Mammary epithelial cell (primary cell): ENCODE measurements at regions of chr2 and their contacts with region 1.

Region 1: DNA sequence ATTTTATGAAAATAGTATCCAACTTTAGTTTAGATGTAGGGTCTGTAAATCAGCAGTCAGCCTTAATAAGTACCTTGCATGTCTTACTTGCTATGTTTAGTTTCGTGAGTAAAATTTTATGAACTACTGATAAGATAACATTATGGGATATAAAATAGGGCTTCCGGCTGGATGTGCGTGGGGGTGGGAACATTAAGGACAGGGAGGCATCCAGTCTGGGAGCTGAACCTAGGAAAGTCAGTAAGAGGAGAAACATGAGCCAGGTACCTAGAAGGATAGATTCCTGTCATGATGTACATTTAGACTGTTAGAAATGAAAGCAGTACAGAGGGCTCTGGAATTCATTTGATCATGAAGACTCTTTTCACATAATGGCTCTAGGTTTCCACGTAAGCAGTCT is 12.7 kb upstream of the KCNJ13 start:
- DNase-seq: no peak
- H3K4me3 ChIP-seq: no peak overlapping the region
- H3K27ac ChIP-seq: no peak overlapping the region
- H3K4me1 ChIP-seq: no peaks in the 10 kb centered on the region
- H3K27me3 ChIP-seq: no peaks in the 10 kb centered on the region
- CTCF ChIP-seq: no peak

Region 2: GRCh38 chr2:232744963-232745362 is 44.1 kb before region 1 on chr2:
- CTCF ChIA-PET with region 1: no interaction called
- dilution Hi-C with region 1: no loop called
- in situ Hi-C with region 1: no loop called
- intact Hi-C with region 1: no loop called
- DNase-seq: no peak
- H3K4me3 ChIP-seq: no peak overlapping the region
- H3K27ac ChIP-seq: no peak overlapping the region
- H3K4me1 ChIP-seq: no peaks in the 10 kb centered on the region
- H3K27me3 ChIP-seq: no peaks in the 10 kb centered on the region
- CTCF ChIP-seq: no peak

Region 3: DNA sequence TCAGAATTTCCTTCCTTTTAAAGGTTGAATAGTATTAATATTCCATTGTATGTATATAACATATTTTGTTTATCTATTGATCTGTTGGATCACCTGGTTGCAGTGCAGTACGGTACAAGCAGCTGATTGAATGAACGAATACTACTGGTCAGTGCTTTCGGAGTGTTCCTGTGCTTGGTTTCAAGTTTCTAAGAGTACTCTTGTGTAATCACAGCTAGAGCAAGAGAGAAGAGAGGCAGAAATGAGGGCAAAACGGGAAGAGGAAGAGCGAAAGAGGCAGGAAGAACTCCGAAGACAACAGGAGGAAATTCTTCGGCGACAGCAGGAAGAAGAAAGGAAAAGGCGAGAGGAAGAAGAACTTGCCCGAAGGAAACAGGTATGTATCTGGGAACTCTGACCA is 27.6 kb after region 1 on chr2:
- CTCF ChIA-PET with region 1: no interaction called
- dilution Hi-C with region 1: loop called (anchors 5 kb)
- in situ Hi-C with region 1: no loop called
- intact Hi-C with region 1: no loop called
- DNase-seq: no peak
- H3K4me3 ChIP-seq: no peak overlapping the region
- H3K27ac ChIP-seq: no peak overlapping the region
- H3K4me1 ChIP-seq: no peaks in the 10 kb centered on the region
- H3K27me3 ChIP-seq: no peaks in the 10 kb centered on the region
- CTCF ChIP-seq: no peak